Activated naive CD4-positive, alpha-beta T cell treated with anti-CD3 and anti-CD28 coated beads for 36 hours (primary cell): ENCODE measurements at regions of chr11 and their contacts with region 1.

Region 1: DNA sequence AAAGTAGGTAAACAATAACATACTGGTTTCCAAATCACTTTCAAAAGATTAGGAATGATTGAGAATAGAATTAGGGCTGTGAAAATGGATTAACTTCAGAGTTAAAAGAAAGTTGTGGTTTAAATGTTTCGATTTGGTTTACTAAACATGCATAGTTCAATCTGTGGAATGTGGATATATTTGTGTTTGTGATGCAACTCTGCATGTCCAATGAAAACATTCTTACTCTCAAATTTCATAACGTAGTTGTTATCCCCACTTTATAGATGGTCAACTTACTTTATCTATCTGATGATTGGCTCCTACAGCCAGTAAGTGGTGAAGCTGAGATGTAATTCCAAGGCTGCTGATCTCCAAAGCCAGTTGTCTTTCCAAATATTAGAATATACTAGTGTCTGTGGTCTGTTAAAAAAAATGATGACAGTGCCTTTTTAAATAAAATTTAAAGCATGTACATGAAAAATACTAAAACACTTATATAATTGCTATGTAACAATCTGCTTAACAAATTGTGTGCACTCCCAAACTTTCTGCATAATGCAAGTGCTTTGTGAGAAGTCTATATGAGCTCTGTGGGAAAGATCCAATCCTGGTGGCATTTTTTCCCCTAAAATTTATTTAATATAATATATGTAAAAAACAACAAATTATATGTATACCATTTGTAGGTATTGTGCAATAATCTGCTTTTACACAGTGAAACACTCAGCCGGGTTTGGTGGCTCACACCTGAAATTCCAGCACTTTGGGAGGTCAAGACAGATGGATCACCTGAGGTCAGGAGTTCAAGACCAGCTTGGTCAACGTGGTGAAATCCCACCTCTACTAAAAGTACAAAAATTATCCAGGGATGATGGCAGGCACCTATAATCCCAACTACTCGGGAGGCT is 9.7 kb upstream of the SIK3 start:
- DNase-seq: no peak
- H3K4me3 Mint-ChIP-seq: no peak overlapping the region
- H3K27ac Mint-ChIP-seq: no peak overlapping the region
- H3K4me1 Mint-ChIP-seq: peaks cover 2% of the 10 kb centered on the region
- H3K27me3 Mint-ChIP-seq: no peaks in the 10 kb centered on the region

Region 2: DNA sequence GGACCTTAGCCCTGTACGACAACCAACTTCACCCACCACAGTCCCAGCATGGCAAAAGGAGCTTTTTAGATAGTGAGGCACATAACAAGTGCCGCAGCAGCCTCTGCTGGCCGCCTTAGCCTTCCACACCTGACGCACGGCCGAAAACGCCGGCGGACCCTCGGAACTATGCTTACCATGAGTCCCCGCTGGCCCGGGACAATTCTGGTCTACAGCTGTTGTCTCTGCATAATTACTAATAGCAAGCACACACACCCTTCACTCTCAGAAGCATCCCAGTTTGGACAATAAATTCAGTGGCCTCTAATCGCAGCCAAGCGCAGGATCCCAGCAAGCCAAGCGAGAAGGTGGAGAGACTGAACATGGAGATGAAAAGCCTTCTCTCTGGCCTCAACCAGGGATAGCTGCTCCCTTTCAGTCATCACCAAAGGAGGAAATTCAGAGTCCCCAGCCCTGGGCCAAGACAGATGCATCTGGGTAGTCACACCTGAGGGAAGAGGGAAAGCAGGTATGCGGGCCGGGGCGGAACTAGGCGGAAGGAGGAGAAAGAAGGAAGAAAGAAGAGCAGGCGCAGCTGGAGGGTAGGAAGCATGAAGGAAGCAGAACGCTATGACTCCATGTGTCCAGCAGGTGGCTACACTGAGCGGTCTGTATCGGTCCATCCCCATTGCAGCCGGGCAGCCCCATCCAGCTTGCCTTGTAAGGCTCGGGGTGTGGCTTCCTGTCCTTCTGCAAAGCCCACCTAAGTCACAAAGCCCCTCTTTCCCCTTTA is 375.5 kb before region 1 on chr11:
- CTCF ChIA-PET with region 1: interaction called, 4 read pairs
- intact Hi-C with region 1: loop called (anchors 1 kb)
- DNase-seq: peak; percentile 77
- H3K4me3 Mint-ChIP-seq: no peak overlapping the region
- H3K27ac Mint-ChIP-seq: no peak overlapping the region
- H3K4me1 Mint-ChIP-seq: peaks cover 10% of the 10 kb centered on the region
- H3K27me3 Mint-ChIP-seq: no peaks in the 10 kb centered on the region

Region 3: DNA sequence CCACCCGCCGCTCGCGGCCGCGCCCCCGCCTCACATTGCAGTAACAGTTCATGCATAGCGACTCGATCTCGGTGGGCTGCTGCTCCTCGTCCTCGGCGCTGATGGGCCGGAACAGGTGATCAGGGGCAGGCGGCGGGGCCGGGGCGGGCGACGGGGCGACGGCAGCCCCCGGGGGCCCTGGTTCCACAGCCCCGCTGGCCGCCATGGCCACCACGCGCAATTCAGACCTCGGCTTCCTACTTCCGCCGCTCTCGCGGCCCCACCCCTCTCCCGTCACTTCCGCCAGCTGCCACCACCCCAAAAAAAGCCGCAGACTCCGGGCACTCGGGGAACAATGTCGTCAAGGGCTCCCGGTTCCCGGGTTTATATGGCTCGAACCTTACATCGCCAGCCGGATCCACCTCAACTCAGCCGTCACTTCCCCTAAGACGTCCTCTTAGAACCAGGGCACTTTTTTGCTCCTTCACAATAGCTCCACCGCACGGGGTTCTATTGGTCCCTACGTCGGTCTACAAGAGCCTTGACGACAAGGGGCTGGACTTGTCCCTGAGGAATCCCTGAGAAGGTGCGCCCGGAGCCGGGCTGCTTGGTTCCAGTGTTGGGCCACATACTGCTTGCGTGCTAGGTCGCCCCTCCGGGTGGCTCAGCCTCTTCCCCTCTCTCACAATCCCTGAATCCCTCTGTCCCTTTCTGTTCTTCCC is 320.0 kb before region 1 on chr11 and contains the start of gene ZPR1:
- CTCF ChIA-PET with region 1: interaction called, 60 read pairs
- intact Hi-C with region 1: loop called (anchors 1 kb)
- DNase-seq: peak; percentile 87
- H3K4me3 Mint-ChIP-seq: peak within 1 kb of the TSS; percentile 92
- H3K27ac Mint-ChIP-seq: peak within 1 kb of the TSS; percentile 87
- H3K4me1 Mint-ChIP-seq: peaks cover 51% of the 10 kb centered on the region
- H3K27me3 Mint-ChIP-seq: no peaks in the 10 kb centered on the region
- total RNA-seq, gene ZPR1: 87.2 to 87.8 TPM

Region 4: DNA sequence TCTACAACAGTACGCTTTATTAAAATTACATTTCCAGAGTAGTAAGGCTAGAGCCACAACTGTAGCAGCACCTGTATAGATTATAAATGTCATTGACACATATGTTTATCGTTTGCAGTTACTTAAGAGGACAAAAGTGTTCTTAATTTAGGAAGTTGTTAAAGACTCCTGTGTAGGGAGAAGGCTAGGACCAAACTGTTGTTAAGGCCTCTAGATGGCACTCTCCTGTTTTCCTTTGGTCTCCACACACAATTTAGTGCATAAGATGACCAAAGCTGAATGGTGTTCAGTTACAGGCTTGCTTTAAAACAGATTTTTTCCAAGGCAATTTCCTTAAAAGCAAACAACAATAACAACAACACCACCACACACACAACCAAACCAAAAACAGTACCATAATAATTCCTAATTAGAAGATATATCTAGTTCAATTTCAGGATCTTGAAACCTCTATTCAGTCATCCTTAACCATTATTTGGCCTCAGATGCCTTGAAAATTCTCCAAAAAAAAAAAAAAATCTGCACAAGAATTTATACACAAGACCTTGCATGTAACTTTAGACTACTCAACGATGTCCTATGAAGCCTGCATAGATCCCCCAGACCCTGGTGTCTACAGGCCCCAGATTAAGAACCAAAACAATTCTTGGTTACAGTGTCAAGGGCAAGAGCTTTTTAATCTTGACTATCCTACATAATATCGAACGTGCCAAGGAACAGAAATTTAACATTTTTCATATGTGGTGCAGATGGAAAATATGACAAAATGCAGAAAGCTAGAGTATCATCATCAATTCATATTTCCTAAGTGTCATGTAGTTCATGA is 227.9 kb before region 1 on chr11:
- CTCF ChIA-PET with region 1: interaction called, 63 read pairs
- intact Hi-C with region 1: loop called (anchors 1 kb)
- DNase-seq: peak; percentile 33
- H3K4me3 Mint-ChIP-seq: no peak overlapping the region
- H3K27ac Mint-ChIP-seq: no peak overlapping the region
- H3K4me1 Mint-ChIP-seq: peaks cover 23% of the 10 kb centered on the region
- H3K27me3 Mint-ChIP-seq: no peaks in the 10 kb centered on the region

Region 5: GRCh38 chr11:116895048-116895757 is 212.7 kb before region 1 on chr11:
- CTCF ChIA-PET with region 1: interaction called, 8 read pairs
- intact Hi-C with region 1: loop called (anchors 1 kb)
- DNase-seq: peak; percentile 35
- H3K4me3 Mint-ChIP-seq: no peak overlapping the region
- H3K27ac Mint-ChIP-seq: no peak overlapping the region
- H3K4me1 Mint-ChIP-seq: peaks cover 13% of the 10 kb centered on the region
- H3K27me3 Mint-ChIP-seq: no peaks in the 10 kb centered on the region

Region 6: GRCh38 chr11:117064275-117064674 is 43.7 kb before region 1 on chr11:
- CTCF ChIA-PET with region 1: no interaction called
- intact Hi-C with region 1: no loop called
- DNase-seq: no peak
- H3K4me3 Mint-ChIP-seq: no peak overlapping the region
- H3K27ac Mint-ChIP-seq: no peak overlapping the region
- H3K4me1 Mint-ChIP-seq: peaks cover 73% of the 10 kb centered on the region
- H3K27me3 Mint-ChIP-seq: no peaks in the 10 kb centered on the region

Region 7: DNA sequence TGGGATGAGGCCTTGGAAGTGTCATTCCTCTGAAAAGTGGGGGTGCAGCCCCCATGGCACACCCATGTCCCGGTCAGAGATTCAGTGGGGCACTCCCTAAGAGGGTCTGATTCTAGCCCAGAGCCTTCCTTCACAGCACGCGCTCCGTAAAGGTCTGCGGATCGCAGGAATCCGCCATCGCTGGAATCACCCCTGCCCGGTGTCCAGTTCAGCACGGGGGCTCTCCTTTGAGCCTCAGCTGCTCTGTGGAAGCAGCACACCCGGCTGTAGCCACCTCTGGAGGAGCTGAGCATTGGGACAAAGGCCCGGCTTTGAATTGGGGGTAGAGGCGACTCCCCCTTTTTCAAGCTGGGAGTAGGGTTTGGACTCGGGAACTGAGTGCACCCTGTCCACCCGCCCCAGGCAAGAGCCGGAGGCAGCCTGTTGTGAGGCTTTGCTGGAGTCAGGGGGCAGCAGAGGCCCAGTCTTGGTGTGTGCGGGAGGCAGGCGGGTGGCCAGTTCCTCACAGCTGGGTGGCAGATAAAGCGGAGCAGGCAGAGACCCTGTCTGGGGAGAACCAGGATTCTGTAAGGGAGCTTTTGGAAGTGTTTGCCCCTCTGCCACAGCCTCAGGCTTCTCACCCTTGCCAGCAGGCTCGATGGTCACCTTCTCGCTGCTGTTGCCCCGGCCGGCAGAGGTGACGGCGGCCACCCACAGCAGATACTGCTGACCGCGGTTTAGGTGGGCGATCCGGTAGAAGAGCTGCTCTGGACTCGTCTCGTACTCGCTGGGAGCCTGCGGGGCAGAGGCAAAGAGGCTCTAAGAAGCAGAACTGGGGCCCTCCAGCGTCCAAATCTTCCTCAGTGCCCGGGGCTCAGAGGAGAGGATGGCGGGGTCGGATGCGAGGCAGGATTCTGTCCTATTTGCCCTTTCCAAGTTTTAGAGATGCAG is 335.6 kb after region 1 on chr11:
- CTCF ChIA-PET with region 1: no interaction called
- intact Hi-C with region 1: no loop called
- DNase-seq: peak; percentile 48
- H3K4me3 Mint-ChIP-seq: no peak overlapping the region
- H3K27ac Mint-ChIP-seq: no peak overlapping the region
- H3K4me1 Mint-ChIP-seq: no peaks in the 10 kb centered on the region
- H3K27me3 Mint-ChIP-seq: peaks cover 24% of the 10 kb centered on the region